HepG2 (cell line): ENCODE measurements at regions of chr7 and their contacts with region 1.

Region 1: DNA sequence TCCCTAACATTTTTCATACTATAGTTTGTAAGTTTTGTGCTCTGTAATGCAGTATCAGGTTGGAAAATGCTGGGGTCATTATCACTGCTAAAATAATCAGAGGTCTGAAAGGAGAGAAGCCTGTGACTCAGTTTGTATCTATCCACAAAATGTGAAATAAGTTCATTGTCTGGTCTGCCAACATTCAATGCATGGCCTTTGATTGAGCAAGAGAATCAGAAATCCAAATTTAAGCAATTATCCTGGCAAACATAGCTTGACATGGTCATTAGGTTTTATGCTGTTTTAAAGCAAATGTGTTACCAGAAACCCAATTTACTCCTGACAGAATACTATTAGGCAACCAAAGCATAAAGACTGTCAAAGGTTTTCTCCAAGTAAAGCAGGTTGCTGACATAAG is 709.7 kb upstream of the SEMA3D start:
- DNase-seq: no peak
- ATAC-seq: no peak
- H3K4me3 ChIP-seq: no peak overlapping the region
- H3K27ac ChIP-seq: no peak overlapping the region
- H3K4me1 ChIP-seq: no peaks in the 10 kb centered on the region
- H3K27me3 ChIP-seq: no peaks in the 10 kb centered on the region
- CTCF ChIP-seq: no peak
- EP300 ChIP-seq: no peak
- POLR2A ChIP-seq: no peak
- RAD21 ChIP-seq: no peak

Region 2: DNA sequence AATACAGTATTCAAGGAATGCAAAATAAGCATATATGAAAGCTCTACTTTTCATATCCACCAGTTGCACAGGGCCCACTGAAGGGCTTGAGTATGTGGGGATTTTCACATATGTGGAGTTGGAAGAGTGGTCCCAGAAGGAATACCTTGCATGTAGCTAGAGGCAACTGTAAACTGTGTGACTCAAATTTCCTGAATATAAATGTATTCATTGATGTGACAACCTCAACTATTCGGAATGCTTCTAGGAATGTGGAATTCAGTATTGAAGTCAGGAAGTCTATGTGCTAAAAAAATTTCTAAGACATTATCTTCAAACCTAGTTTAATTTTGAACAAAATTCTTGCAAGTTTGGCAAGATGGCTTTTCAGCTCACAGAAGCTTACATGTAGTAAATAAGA is 14.2 kb before region 1 on chr7:
- CTCF ChIA-PET with region 1: no interaction called
- POLR2A ChIA-PET with region 1: no interaction called
- in situ Hi-C with region 1: no loop called
- intact Hi-C with region 1: loop called (anchors 2 kb)
- DNase-seq: no peak
- ATAC-seq: no peak
- H3K4me3 ChIP-seq: no peak overlapping the region
- H3K27ac ChIP-seq: no peak overlapping the region
- H3K4me1 ChIP-seq: no peaks in the 10 kb centered on the region
- H3K27me3 ChIP-seq: no peaks in the 10 kb centered on the region
- CTCF ChIP-seq: no peak
- EP300 ChIP-seq: no peak
- POLR2A ChIP-seq: no peak
- RAD21 ChIP-seq: no peak

Region 3: GRCh38 chr7:87328281-87328680 is 1431.8 kb after region 1 on chr7:
- CTCF ChIA-PET with region 1: no interaction called
- POLR2A ChIA-PET with region 1: no interaction called
- in situ Hi-C with region 1: no loop called
- intact Hi-C with region 1: no loop called
- DNase-seq: no peak
- ATAC-seq: no peak
- H3K4me3 ChIP-seq: no peak overlapping the region
- H3K27ac ChIP-seq: no peak overlapping the region
- H3K4me1 ChIP-seq: peaks cover 28% of the 10 kb centered on the region
- H3K27me3 ChIP-seq: no peaks in the 10 kb centered on the region
- CTCF ChIP-seq: no peak
- EP300 ChIP-seq: no peak
- POLR2A ChIP-seq: no peak
- RAD21 ChIP-seq: no peak